ENCODE measurements at regions of chr20 and their contacts with region 1.

Region 1: DNA sequence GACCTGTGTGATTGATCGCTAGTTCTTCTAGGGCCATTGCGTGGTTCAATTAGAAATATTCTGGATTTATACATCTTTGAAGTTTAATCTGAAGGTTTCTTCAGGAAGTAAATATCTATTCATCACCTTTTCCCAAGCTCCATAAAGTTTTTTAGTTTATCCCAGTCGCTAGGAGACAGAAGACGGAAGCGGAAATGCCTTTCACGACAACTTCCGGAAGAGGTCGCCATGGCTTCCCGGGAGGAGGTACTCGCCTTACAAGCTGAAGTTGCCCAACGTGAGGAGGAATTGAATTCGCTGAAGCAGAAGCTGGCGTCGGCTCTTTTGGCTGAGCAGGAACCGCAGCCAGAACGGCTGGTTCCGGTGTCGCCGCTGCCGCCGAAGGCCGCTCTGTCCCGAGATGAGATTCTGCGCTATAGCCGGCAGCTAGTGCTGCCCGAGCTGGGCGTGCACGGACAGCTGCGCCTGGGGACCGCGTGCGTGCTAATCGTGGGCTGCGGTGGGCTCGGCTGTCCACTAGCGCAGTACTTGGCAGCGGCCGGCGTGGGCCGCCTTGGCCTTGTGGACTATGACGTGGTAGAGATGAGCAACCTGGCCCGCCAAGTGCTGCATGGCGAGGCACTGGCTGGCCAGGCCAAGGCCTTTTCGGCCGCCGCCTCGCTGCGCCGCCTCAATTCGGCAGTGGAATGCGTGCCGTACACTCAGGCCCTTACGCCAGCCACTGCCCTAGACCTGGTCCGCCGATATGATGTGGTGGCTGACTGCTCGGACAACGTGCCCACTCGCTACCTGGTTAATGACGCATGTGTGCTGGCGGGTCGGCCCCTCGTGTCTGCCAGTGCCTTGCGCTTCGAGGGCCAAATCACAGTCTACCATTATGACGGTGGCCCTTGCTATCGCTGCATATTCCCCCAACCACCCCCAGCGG is at the start of gene MOCS3:
- DNase-seq: peak; percentile 77
- ATAC-seq: peak; percentile 88
- total RNA-seq, gene MOCS3: 3.1 TPM

Region 2: DNA sequence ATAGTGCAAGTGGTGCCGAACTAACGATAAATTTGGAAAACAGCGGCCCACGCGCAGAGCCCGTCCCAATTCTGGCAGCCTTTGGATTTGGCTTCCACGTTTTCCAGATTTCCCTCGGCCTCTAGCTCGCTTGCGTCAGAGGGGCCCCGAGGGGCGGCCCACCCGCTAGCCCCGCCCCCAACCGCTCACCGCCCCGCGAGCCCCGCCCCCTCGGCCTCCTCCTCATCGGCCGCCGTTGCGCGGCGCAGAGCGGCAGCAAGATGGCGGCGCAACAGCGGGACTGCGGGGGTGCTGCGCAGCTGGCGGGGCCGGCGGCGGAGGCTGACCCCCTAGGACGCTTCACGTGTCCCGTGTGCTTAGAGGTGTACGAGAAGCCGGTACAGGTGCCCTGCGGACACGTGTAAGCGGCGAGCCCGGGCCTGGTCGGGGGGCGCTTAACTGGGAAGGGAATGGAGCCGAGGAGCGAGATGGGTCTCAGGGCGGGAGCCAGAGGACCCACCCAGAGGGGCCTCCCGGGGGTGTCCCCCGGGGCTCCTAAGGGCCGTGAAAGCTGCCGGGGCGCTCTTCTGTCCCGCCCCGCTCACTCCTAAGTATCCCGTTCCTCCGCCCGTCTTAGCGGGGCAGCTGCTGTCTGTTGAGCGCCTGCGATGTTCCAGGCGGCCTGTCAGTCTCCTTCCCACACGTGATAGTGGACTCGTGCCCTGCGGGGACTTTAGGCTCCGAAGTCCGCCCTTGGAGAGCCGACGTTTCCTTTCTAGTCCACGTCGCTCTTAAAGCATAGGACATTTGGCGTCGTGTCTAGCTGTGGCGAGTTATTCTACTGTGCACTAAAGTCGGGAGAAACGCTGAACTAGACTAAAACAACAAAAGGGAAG is 1022.5 kb before region 1 on chr20 and contains the start of gene RNF114:
- intact Hi-C with region 1: no loop called
- DNase-seq: peak; percentile 95
- ATAC-seq: peak; percentile 94
- total RNA-seq, gene RNF114: 49.8 TPM

Region 3: GRCh38 chr20:50856036-50856756 is 102.7 kb before region 1 on chr20:
- intact Hi-C with region 1: no loop called
- DNase-seq: no peak
- ATAC-seq: no peak

Region 4: GRCh38 chr20:50913690-50914375 is 45.0 kb before region 1 on chr20:
- intact Hi-C with region 1: no loop called
- DNase-seq: no peak
- ATAC-seq: peak; percentile 27

Region 5: DNA sequence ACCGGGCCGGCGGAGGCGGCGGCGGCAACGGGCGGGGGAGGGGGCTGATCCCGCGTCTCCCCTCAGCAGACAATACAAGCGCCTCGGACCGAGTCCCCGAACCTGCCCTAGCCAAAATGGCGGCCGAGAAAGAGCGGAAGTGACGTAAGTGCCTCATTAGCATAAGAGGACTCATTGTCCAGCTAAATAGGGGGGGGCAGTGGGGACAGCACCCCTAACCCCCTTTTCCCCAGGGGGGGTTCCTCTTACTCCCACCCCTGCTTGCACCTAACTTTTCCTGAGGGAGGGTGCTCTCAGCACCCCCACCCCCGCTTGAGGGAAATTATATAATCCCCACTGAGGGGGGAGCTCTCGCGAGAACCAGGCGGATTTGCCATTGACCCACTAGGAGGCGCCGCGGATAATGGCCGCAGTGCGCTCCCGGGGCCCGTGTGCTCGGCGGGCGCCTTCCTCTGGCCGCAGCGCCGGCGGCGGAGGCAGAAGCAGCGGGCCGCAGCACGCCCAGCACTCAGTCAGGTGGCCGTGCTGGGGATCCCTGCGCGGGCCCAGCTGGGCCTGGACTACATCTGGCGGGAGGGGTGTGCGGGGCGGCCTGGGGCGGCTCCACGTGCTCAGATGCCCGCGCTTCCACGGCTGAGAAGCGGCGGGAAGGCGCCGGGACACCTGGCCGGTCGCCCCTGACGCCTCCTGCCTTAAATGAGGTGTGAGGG is 27.4 kb before region 1 on chr20 and contains the start of gene ADNP:
- intact Hi-C with region 1: loop called (anchors 2 kb)
- DNase-seq: peak; percentile 93
- ATAC-seq: peak; percentile 87
- total RNA-seq, gene ADNP: 34.2 TPM